ENCODE measurements at regions of chr6 and their contacts with region 1.

Region 1: GRCh38 chr6:40510442-40510841 is 76.7 kb downstream of the LRFN2 start:
- DNase-seq: no peak
- H3K4me3 Mint-ChIP-seq: no peak overlapping the region
- H3K27ac Mint-ChIP-seq: no peak overlapping the region
- H3K4me1 Mint-ChIP-seq: peaks cover 9% of the 10 kb centered on the region
- H3K27me3 Mint-ChIP-seq: peaks cover 23% of the 10 kb centered on the region
- CTCF ChIP-seq: no peak

Region 2: DNA sequence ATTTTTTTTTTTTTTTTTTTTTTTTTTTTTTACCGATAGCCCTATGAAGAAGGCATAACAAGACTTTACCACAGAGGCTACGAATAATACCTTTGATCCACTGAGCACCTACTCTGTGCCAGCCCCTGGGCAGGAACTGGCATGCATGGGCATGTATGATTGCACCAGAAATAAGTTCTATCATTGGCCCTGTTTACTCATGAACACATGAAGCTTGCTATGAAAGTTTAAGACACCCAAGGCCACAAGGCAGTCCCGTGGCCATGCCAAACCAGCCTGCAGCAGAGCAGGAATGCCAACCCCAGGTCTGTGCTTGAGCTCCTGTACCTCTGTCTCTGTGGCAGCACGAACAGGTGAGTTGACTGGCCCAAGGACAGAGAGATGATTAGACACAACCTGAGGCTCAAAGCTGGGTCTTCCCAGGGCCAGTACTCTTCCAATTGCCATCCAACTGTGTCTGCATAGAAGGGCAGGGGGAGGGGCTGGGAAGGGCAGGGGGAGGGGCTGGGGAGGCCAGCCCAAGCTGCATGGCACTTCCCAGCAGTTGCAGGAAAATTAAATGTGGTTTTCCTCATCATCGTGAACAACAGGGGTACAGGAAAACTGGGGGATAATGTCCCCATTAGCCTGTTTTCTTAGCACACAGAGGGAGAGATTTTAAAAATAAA is 13.2 kb after region 1 on chr6:
- CTCF ChIA-PET with region 1: interaction called, 10 read pairs
- intact Hi-C with region 1: no loop called
- DNase-seq: no peak
- H3K4me3 Mint-ChIP-seq: no peak overlapping the region
- H3K27ac Mint-ChIP-seq: no peak overlapping the region
- H3K4me1 Mint-ChIP-seq: no peaks in the 10 kb centered on the region
- H3K27me3 Mint-ChIP-seq: peaks cover 85% of the 10 kb centered on the region
- CTCF ChIP-seq: no peak